Activated CD4-positive, alpha-beta memory T cell treated with anti-CD3 and anti-CD28 coated beads, Interleukin-2, amount 10 ng/mL, durations not matched to agents 7 days and 5 days (primary cell): ENCODE measurements at regions of chr19 and their contacts with region 1.

Region 1: GRCh38 chr19:48993175-48994034 is at the starts of genes GYS1 and RUVBL2:
- DNase-seq: peak; percentile 99
- H3K4me3 Mint-ChIP-seq: peak within 1 kb of the TSS; percentile 98
- H3K27ac Mint-ChIP-seq: peak within 1 kb of the TSS; percentile 95
- H3K4me1 Mint-ChIP-seq: peaks cover 51% of the 10 kb centered on the region
- H3K27me3 Mint-ChIP-seq: no peaks in the 10 kb centered on the region
- total RNA-seq, gene GYS1: 55.1 to 56.3 TPM
- total RNA-seq, gene RUVBL2: 74.7 to 80.1 TPM

Region 2: DNA sequence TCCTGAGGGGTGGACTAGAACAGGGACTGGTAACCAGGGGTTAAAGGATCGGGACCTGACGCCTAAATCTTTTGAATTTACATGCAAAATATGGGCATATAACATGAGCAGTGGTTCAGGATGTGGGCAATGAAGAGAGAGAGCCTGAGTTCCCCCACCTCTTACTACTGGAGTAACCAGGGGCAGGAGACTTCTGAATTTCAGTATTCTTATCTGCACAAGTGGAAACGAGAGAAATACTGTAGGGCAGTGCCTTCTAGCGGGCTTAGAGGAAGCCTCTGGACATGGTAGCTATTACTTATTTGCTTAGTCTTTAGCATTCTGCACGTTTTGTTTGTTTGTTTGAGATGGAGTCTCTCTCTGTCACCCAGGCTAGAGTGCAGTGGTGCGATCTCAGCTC is 208.9 kb before region 1 on chr19:
- CTCF ChIA-PET with region 1: interaction called, 18 read pairs
- POLR2A ChIA-PET with region 1: no interaction called
- DNase-seq: no peak
- H3K4me3 Mint-ChIP-seq: no peak overlapping the region
- H3K27ac Mint-ChIP-seq: no peak overlapping the region
- H3K4me1 Mint-ChIP-seq: peaks cover 3% of the 10 kb centered on the region
- H3K27me3 Mint-ChIP-seq: peaks cover 14% of the 10 kb centered on the region

Region 3: GRCh38 chr19:48899781-48900476 is 93.5 kb before region 1 on chr19 and contains the start of gene NUCB1:
- CTCF ChIA-PET with region 1: interaction called, 21 read pairs
- POLR2A ChIA-PET with region 1: interaction called, 14 read pairs
- DNase-seq: peak; percentile 100
- H3K4me3 Mint-ChIP-seq: peak within 1 kb of the TSS; percentile 96
- H3K27ac Mint-ChIP-seq: peak within 1 kb of the TSS; percentile 94
- H3K4me1 Mint-ChIP-seq: peaks cover 39% of the 10 kb centered on the region
- H3K27me3 Mint-ChIP-seq: peaks cover 6% of the 10 kb centered on the region
- total RNA-seq, gene NUCB1: 287 to 300 TPM

Region 4: DNA sequence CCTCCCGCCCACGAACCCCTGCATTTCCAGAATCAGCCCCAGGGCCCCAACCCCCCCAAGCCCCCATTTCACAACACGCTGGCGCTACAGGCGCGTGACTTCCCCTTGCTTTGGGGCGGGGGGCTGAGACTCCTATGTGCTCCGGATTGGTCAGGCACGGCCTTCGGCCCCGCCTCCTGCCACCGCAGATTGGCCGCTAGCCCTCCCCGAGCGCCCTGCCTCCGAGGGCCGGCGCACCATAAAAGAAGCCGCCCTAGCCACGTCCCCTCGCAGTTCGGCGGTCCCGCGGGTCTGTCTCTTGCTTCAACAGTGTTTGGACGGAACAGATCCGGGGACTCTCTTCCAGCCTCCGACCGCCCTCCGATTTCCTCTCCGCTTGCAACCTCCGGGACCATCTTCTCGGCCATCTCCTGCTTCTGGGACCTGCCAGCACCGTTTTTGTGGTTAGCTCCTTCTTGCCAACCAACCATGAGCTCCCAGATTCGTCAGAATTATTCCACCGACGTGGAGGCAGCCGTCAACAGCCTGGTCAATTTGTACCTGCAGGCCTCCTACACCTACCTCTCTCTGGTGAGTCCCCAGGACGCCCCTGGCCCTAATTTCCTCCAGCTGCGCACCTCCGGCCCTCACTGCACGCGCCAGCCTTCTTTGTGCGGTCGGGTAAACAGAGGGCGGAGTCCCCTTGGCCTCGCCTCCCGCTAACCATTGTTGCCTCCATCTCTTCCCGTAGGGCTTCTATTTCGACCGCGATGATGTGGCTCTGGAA is 28.2 kb before region 1 on chr19 and contains the start of gene FTL:
- CTCF ChIA-PET with region 1: interaction called, 103 read pairs
- POLR2A ChIA-PET with region 1: interaction called, 13 read pairs
- DNase-seq: peak; percentile 92
- H3K4me3 Mint-ChIP-seq: peak within 1 kb of the TSS; percentile 92
- H3K27ac Mint-ChIP-seq: peak within 1 kb of the TSS; percentile 94
- H3K4me1 Mint-ChIP-seq: peaks cover 72% of the 10 kb centered on the region
- H3K27me3 Mint-ChIP-seq: no peaks in the 10 kb centered on the region
- total RNA-seq, gene FTL: 1,110 to 1,123 TPM

Region 5: GRCh38 chr19:48982280-48982679 is 11.1 kb before region 1 on chr19:
- CTCF ChIA-PET with region 1: interaction called, 103 read pairs
- POLR2A ChIA-PET with region 1: interaction called, 12 read pairs
- DNase-seq: no peak
- H3K4me3 Mint-ChIP-seq: no peak overlapping the region
- H3K27ac Mint-ChIP-seq: no peak overlapping the region
- H3K4me1 Mint-ChIP-seq: peaks cover 6% of the 10 kb centered on the region
- H3K27me3 Mint-ChIP-seq: no peaks in the 10 kb centered on the region

Region 6: DNA sequence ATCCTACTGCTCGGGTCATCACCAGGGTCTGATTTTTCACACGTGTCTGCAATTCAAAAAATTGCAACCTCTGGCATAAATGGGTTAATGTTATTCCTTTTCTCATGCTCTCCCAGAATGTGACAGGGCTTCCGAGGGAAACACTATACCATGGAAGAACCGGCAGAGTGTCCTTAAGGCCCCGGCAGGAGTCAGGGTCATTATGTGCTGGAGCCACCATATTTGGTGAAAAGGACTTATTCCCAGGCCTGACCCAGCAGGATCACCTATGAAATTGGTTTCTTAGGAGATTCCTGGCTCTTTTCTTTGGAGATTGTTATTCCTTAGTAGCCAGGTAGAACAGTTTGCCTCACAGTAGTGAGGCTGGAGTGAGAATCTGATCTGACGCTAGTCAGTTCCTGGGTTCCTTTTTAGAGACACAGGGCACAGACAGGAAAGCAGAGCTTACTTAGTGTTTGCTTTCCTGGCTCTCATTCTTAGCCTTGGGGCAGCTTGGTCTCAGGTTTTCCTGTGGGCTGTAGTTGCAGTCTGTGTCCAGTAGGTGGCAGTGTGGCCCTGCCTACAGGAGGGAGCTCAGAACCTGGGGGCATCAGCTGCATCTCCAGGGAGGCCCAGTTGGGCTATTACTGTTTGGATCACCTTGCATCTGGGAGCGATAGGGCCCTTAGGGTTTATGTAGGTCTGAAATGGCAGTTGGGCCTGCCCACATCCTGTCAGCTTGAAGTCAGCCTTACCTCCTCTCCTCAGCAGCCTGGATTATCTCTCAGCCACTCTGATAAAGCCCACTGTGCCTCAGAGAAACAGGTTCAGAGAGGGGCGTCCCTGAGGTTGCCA is 104.3 kb after region 1 on chr19:
- CTCF ChIA-PET with region 1: interaction called, 10 read pairs
- POLR2A ChIA-PET with region 1: interaction called, 4 read pairs
- DNase-seq: peak; percentile 79
- H3K4me3 Mint-ChIP-seq: no peak overlapping the region
- H3K27ac Mint-ChIP-seq: peak overlapping the region; percentile 63
- H3K4me1 Mint-ChIP-seq: peaks cover 14% of the 10 kb centered on the region
- H3K27me3 Mint-ChIP-seq: no peaks in the 10 kb centered on the region